ENCODE measurements at regions of chr12 and their contacts with region 1.

Region 1: GRCh38 chr12:6285063-6285477 is 25.4 kb upstream of the PLEKHG6 start:
- DNase-seq: peak; percentile 77
- ATAC-seq: peak; percentile 92
- H3K4me3 Mint-ChIP-seq: no peak overlapping the region
- H3K27ac Mint-ChIP-seq: no peak overlapping the region
- H3K4me1 Mint-ChIP-seq: peaks cover 2% of the 10 kb centered on the region
- H3K27me3 Mint-ChIP-seq: peaks cover 7% of the 10 kb centered on the region

Region 2: GRCh38 chr12:5965950-5966383 is 319.1 kb before region 1 on chr12:
- CTCF ChIA-PET with region 1: no interaction called
- POLR2A ChIA-PET with region 1: no interaction called
- intact Hi-C with region 1: loop called in 1 of 2 experiments (anchors 1 kb)
- DNase-seq: peak; percentile 73
- ATAC-seq: peak; percentile 91
- H3K4me3 Mint-ChIP-seq: no peak overlapping the region
- H3K27ac Mint-ChIP-seq: no peak overlapping the region
- H3K4me1 Mint-ChIP-seq: no peaks in the 10 kb centered on the region
- H3K27me3 Mint-ChIP-seq: peaks cover 2% of the 10 kb centered on the region

Region 3: DNA sequence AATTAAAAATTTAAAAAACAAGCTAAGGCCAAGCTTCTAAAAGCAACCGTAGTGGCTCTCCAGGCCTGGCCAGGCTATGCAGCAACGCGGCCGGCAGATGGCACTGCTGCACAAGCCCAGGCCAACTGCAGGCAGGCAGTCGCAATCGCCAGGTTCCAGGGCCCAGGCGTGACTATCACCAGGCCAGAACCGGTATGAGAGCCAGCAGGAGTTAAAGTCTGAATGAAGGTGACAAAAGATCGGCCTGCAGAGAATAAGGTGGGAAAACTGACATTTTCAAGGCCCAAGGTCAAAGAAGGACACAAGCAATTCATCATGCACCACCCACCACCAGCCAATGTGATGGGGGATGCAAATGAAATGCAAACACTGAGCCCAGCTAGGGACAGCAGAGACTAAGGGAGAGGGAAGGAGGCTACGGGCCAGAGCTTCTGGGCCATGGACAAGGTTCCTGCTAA is 296.4 kb before region 1 on chr12:
- CTCF ChIA-PET with region 1: interaction called, 27 read pairs
- POLR2A ChIA-PET with region 1: no interaction called
- intact Hi-C with region 1: loop called (anchors 1 kb)
- DNase-seq: peak; percentile 89
- ATAC-seq: peak; percentile 97
- H3K4me3 Mint-ChIP-seq: no peak overlapping the region
- H3K27ac Mint-ChIP-seq: no peak overlapping the region
- H3K4me1 Mint-ChIP-seq: no peaks in the 10 kb centered on the region
- H3K27me3 Mint-ChIP-seq: no peaks in the 10 kb centered on the region

Region 4: DNA sequence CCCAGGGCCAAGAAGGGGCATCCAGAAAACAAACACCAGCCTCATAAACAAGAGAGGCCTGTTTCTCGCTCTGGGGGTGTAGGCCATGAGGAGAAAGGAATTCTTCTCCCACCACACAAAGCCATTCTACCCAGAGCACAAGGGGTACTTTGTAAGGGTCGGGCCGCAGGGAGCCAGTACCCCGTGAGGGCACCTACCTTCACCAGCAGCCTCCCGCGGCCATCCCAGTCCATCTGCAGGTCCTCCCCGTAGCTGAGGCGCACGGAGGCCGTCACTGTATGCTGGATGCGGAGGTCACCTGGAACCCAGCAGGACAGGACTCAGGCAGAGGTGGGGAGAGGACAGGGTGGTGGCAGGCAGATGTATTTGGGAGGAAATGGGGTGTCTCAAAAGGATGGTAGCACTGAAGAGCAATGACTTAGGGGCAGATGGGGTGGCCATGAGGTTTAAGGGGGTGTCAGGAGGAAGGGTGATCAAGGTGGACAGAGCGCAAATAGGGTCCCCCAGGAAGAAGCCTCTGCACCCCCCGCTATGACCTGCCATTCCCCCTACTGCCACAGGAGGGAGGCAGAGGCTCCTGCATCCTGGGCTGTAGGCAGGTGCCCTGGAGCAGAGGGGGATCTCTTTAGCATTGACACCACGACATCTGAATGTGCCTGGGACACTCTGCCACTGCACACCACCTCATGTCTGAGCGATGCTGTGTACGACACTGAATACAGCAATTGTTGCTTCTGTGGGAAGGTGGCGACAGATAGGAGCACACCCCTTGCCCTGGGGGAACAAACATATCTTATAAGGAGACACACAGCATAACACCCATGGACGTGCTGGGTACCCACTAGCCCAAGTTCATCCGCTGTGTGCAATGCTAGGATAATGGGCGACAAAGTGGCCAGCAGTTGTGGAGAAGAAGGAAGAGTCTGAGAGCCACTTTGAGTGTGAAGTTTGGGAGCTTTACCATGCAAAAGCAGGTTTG is 222.0 kb before region 1 on chr12:
- CTCF ChIA-PET with region 1: interaction called, 8 read pairs
- POLR2A ChIA-PET with region 1: no interaction called
- intact Hi-C with region 1: loop called (anchors 1 kb)
- DNase-seq: peak; percentile 75
- ATAC-seq: peak; percentile 90
- H3K4me3 Mint-ChIP-seq: no peak overlapping the region
- H3K27ac Mint-ChIP-seq: no peak overlapping the region
- H3K4me1 Mint-ChIP-seq: no peaks in the 10 kb centered on the region
- H3K27me3 Mint-ChIP-seq: peaks cover 4% of the 10 kb centered on the region

Region 5: DNA sequence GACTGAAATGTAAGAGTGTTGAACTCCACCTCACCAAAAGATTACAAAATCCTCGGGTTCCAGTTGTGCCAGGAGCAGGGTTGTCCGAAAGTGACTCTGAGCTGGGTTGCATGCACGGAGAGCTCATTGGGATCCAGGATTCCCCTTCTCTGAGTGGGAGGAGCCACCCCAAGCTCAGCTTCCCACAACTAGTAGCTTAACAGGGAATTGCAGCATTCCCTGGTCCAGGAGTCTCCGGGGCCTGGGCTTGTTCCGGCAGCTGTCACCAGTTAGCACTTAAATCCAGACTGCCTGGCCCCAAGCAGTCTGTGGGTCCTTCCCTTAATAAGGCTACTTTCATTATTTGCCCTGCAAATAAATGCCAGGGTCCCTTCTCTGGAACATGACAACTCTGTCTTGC is 34.7 kb before region 1 on chr12:
- CTCF ChIA-PET with region 1: no interaction called
- POLR2A ChIA-PET with region 1: no interaction called
- intact Hi-C with region 1: no loop called
- DNase-seq: no peak
- ATAC-seq: no peak
- H3K4me3 Mint-ChIP-seq: no peak overlapping the region
- H3K27ac Mint-ChIP-seq: no peak overlapping the region
- H3K4me1 Mint-ChIP-seq: no peaks in the 10 kb centered on the region
- H3K27me3 Mint-ChIP-seq: peaks cover 2% of the 10 kb centered on the region